ENCODE measurements at regions of chr6 and their contacts with region 1.

Region 1: DNA sequence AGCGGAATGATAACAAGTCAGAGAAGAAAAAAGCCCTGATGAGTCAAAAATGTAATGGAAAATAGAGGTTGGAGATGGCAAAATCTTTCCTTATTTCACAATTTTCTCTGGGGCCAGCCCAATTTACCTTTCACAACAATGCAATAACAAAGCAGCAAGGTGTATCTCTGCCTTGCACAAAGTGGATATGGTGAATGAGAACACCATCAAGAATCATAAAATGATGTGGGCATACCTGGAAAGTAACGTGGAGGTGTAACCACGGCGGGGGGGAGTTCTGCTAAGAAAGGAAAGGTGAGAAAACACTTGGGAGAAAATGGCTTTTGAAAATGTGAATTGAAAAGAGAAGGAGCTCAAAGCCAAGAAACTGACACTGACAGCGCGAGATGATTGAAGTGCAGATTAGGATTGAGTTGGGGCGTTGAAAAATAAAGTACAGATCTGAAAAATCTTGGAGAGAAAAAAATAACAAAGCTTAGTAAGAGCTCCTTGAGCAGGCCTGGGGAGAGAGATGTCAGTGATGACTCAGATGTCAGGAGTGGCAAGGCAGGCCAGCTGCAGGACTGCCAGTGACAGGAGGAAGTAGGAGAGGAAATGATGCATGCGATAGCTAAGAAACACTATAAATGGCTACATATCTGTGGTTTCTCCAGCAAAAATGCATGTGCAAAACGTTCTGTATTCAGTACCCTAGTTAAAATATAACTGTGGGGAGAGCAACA is 26.2 kb downstream of the ARHGAP18 start:
- DNase-seq: peak in 8 of 9 donors; percentile 11 to 54 (median 34)
- ATAC-seq: peak; percentile 92
- H3K4me3 ChIP-seq: no peak overlapping the region
- H3K4me3 Mint-ChIP-seq: peak overlapping the region in 8 of 10 donors; percentile 28 to 73 (median 34)
- H3K27ac ChIP-seq: no peak overlapping the region
- H3K27ac Mint-ChIP-seq: peak overlapping the region in 8 of 9 donors; percentile 1 to 81 (median 50)
- H3K4me1 ChIP-seq: peaks cover 31 to 46% of the 10 kb centered on the region in 2 donors
- H3K4me1 Mint-ChIP-seq: peaks cover 38 to 68% (median 45%) of the 10 kb centered on the region in 7 donors
- H3K27me3 ChIP-seq: no peaks in the 10 kb centered on the region
- H3K27me3 Mint-ChIP-seq: no peaks in the 10 kb centered on the region

Region 2: GRCh38 chr6:129695373-129696027 is 11.7 kb after region 1 on chr6:
- CTCF ChIA-PET with region 1: no interaction called
- POLR2A ChIA-PET with region 1: no interaction called
- intact Hi-C with region 1: loop called (anchors 1 kb)
- DNase-seq: no peak
- ATAC-seq: no peak
- H3K4me3 ChIP-seq: no peak overlapping the region
- H3K4me3 Mint-ChIP-seq: peak overlapping the region in 1 of 10 donors; percentile 75
- H3K27ac ChIP-seq: no peak overlapping the region
- H3K27ac Mint-ChIP-seq: peak overlapping the region in 8 of 9 donors; percentile 3 to 87 (median 26)
- H3K4me1 ChIP-seq: peaks cover 10% of the 10 kb centered on the region in 2 donors
- H3K4me1 Mint-ChIP-seq: peaks cover 0 to 65% (median 13%) of the 10 kb centered on the region in 7 donors
- H3K27me3 ChIP-seq: no peaks in the 10 kb centered on the region
- H3K27me3 Mint-ChIP-seq: no peaks in the 10 kb centered on the region

Region 3: GRCh38 chr6:129709769-129710449 is 26.1 kb after region 1 on chr6 and contains the start of gene ARHGAP18:
- CTCF ChIA-PET with region 1: no interaction called
- POLR2A ChIA-PET with region 1: interaction called, 3 read pairs
- intact Hi-C with region 1: loop called (anchors 1 kb)
- DNase-seq: peak; percentile 40 to 69 (median 49)
- ATAC-seq: peak; percentile 95
- H3K4me3 ChIP-seq: peak within 1 kb of the TSS; percentile 66
- H3K4me3 Mint-ChIP-seq: peak within 1 kb of the TSS; percentile 90 to 99 (median 94)
- H3K27ac ChIP-seq: peak within 1 kb of the TSS; percentile 37
- H3K27ac Mint-ChIP-seq: peak within 1 kb of the TSS; percentile 53 to 93 (median 83)
- H3K4me1 ChIP-seq: peaks cover 0 to 8% of the 10 kb centered on the region in 2 donors
- H3K4me1 Mint-ChIP-seq: peaks cover 21 to 43% (median 30%) of the 10 kb centered on the region in 7 donors
- H3K27me3 ChIP-seq: no peaks in the 10 kb centered on the region
- H3K27me3 Mint-ChIP-seq: peaks cover 0 to 2% (median 0%) of the 10 kb centered on the region in 5 donors
- total RNA-seq, gene ARHGAP18: 1.1 to 9.4 (median 2.0) TPM

Measured in naive thymus-derived CD4-positive, alpha-beta T cell (primary cell).